PC-9 (cell line): ENCODE measurements at regions of chr5 and their contacts with region 1.

Region 1: DNA sequence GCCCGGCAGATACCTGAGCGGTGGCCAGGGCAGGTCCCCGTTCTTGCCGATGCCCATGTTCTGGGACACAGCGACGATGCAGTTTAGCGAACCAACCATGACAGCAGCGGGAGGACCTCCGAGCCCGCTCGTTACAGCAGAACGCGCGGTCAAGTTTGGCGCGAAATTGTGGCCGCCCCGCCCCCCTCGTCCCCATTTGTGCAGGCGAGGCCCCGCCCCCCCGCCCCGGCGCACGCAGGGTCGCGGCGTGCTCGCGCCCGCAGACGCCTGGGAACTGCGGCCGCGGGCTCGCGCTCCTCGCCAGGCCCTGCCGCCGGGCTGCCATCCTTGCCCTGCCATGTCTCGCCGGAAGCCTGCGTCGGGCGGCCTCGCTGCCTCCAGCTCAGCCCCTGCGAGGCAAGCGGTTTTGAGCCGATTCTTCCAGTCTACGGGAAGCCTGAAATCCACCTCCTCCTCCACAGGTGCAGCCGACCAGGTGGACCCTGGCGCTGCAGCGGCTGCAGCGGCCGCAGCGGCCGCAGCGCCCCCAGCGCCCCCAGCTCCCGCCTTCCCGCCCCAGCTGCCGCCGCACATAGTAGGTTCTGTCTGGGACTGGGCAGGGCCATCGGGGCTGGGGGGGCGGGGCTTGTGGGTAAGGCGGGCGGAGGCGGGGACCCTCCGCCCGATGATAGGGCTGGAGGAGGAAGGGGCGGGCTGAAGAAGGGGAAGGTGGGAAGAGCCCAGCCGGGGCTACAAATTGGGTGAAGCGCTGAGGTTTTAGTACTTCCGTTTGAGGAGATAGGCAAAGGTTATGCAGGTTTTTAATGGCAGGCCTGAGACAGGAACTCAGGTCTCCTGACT is at the starts of genes DHFR and MSH3:
- DNase-seq: peak; percentile 78 to 80
- H3K4me3 ChIP-seq: peak within 1 kb of the TSS; percentile 94
- H3K27ac ChIP-seq: peak within 1 kb of the TSS; percentile 76
- H3K4me1 ChIP-seq: peaks cover 17% of the 10 kb centered on the region
- H3K27me3 ChIP-seq: no peaks in the 10 kb centered on the region
- CTCF ChIP-seq: no peak; the same call in 1 of the 2 replicates
- total RNA-seq, gene DHFR: 28.7 and 45.3 TPM in 2 replicates
- total RNA-seq, gene MSH3: 14.4 and 16.9 TPM in 2 replicates

Region 2: GRCh38 chr5:79791843-79792242 is 862.8 kb before region 1 on chr5:
- CTCF ChIA-PET with region 1: interaction called, 14 read pairs
- POLR2A ChIA-PET with region 1: no interaction called
- intact Hi-C with region 1: no loop called
- DNase-seq: no peak
- H3K4me3 ChIP-seq: no peak overlapping the region
- H3K27ac ChIP-seq: no peak overlapping the region
- H3K4me1 ChIP-seq: no peaks in the 10 kb centered on the region
- H3K27me3 ChIP-seq: no peaks in the 10 kb centered on the region
- CTCF ChIP-seq: no peak

Region 3: GRCh38 chr5:80407735-80408482 is 246.7 kb before region 1 on chr5 and contains the start of gene ZFYVE16:
- CTCF ChIA-PET with region 1: no interaction called
- POLR2A ChIA-PET with region 1: no interaction called
- intact Hi-C with region 1: no loop called
- DNase-seq: peak; percentile 89 to 97
- H3K4me3 ChIP-seq: peak within 1 kb of the TSS; percentile 83
- H3K27ac ChIP-seq: peak within 1 kb of the TSS; percentile 83
- H3K4me1 ChIP-seq: peaks cover 18% of the 10 kb centered on the region
- H3K27me3 ChIP-seq: no peaks in the 10 kb centered on the region
- CTCF ChIP-seq: peak; percentile 47; the same call in 1 of the 2 replicates
- total RNA-seq, gene ZFYVE16: 27.7 and 34.4 TPM in 2 replicates

Region 4: GRCh38 chr5:80442742-80443141 is 211.9 kb before region 1 on chr5:
- CTCF ChIA-PET with region 1: no interaction called
- POLR2A ChIA-PET with region 1: interaction called, 12 read pairs
- intact Hi-C with region 1: no loop called
- DNase-seq: no peak
- H3K4me3 ChIP-seq: no peak overlapping the region
- H3K27ac ChIP-seq: no peak overlapping the region
- H3K4me1 ChIP-seq: no peaks in the 10 kb centered on the region
- H3K27me3 ChIP-seq: no peaks in the 10 kb centered on the region
- CTCF ChIP-seq: no peak

Region 5: DNA sequence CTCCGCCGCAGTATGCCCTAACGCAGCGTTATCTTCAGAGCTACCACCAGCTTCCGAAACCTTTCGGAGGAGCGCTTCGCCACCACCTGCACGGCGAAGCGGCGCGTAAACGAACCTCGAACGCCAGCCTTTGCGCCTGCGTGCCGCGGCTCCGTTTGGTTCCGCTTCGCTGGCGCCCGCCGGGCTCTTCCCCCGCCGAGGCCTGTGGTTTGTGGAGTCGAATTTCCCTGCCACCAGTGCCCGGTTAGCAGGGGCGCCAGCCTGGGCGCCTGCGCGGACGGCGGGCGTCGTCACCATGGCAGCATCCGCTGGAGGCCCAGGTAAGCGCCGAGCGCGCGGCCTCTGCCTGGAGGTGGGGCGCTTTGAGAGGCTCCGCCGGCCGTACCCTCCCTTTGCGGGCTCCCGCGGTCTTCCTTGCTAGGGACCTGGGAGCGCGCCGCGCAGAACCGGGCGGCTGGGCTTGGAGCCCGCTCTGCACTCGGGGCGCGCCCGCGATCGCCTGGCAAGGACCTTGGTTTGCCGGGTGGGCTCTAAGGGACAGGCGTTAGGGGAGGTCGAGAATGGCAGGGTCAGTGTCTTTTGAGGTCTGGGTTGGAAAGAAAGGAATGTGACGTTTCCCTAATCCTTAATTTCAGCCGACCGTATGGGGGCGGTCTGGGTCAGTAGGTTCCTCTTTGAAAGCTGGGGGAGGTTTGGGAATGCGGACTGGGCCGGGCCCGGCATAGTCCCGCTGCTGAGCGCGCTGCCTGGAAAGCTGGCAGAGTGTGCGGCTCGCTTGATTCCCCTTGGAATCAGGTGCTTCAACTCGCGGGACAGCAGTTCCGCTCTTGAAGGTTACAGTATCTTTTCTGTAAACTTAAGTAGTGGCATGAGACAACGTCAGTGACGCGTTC is 166.5 kb before region 1 on chr5 and contains the start of gene FAM151B:
- CTCF ChIA-PET with region 1: no interaction called
- POLR2A ChIA-PET with region 1: interaction called, 3 read pairs
- intact Hi-C with region 1: loop called (anchors 1 kb)
- DNase-seq: peak; percentile 93 to 98
- H3K4me3 ChIP-seq: peak within 1 kb of the TSS; percentile 66
- H3K27ac ChIP-seq: peak within 1 kb of the TSS; percentile 76
- H3K4me1 ChIP-seq: peaks cover 48% of the 10 kb centered on the region
- H3K27me3 ChIP-seq: no peaks in the 10 kb centered on the region
- CTCF ChIP-seq: peak; percentile 48; the same call in 1 of the 2 replicates
- total RNA-seq, gene FAM151B: 1.4 and 1.7 TPM in 2 replicates

Region 6: GRCh38 chr5:80711938-80712337 is 57.3 kb after region 1 on chr5:
- CTCF ChIA-PET with region 1: no interaction called
- POLR2A ChIA-PET with region 1: no interaction called
- intact Hi-C with region 1: no loop called
- DNase-seq: peak in 1 of 2 experiments; percentile 9
- H3K4me3 ChIP-seq: no peak overlapping the region
- H3K27ac ChIP-seq: no peak overlapping the region
- H3K4me1 ChIP-seq: no peaks in the 10 kb centered on the region
- H3K27me3 ChIP-seq: no peaks in the 10 kb centered on the region
- CTCF ChIP-seq: peak; percentile 52